Activated CD4-positive, alpha-beta memory T cell treated with anti-CD3 and anti-CD28 coated beads for 36 hours (primary cell): ENCODE measurements at regions of chr9 and their contacts with region 1.

Region 1: GRCh38 chr9:37302277-37302676 is 120.2 kb upstream of the GRHPR start:
- DNase-seq: peak; percentile 57
- H3K4me3 Mint-ChIP-seq: no peak overlapping the region
- H3K27ac Mint-ChIP-seq: peak overlapping the region; percentile 80
- H3K4me1 Mint-ChIP-seq: peaks cover 39% of the 10 kb centered on the region
- H3K27me3 Mint-ChIP-seq: no peaks in the 10 kb centered on the region

Region 2: DNA sequence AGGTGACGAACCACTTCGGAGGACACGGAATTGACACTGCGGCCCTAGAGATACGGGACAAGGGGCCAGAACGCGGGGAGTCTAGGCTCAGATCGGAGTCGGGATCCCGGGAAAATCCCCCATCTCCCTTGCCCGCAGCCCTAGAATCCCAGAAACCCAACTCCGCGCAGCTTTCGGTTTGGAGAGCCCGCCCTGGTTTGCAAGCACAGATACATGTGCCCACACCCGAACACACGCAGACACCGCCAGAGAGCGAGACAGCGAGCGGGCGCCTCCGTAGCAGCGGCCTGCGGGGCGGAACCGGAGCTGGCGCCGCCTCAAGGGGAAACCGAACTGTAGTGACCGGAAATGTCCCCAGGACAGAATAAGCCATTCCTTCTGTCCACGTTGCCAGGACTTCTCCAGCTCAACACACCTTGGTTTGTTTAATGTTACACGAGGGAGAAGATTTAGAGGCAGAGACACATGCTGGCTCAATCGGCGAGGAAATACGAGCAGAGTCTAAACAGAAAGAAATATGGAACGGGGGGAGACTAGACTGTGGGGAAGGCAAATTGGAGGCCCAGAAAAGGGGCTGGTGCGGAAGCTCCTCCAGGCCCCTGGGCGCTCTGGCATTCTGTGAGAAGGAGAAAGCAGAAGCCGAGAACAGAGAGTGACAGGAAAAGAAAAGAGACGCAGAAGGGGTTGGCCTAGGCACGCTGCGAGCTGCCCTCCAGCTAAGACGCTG is 265.3 kb before region 1 on chr9:
- CTCF ChIA-PET with region 1: no interaction called
- POLR2A ChIA-PET with region 1: no interaction called
- intact Hi-C with region 1: loop called (anchors 5 kb)
- DNase-seq: peak; percentile 56
- H3K4me3 Mint-ChIP-seq: peak overlapping the region; percentile 72
- H3K27ac Mint-ChIP-seq: no peak overlapping the region
- H3K4me1 Mint-ChIP-seq: peaks cover 30% of the 10 kb centered on the region
- H3K27me3 Mint-ChIP-seq: peaks cover 81% of the 10 kb centered on the region

Region 3: GRCh38 chr9:37066139-37066725 is 236.0 kb before region 1 on chr9:
- CTCF ChIA-PET with region 1: no interaction called
- POLR2A ChIA-PET with region 1: no interaction called
- intact Hi-C with region 1: no loop called
- DNase-seq: no peak
- H3K4me3 Mint-ChIP-seq: no peak overlapping the region
- H3K27ac Mint-ChIP-seq: no peak overlapping the region
- H3K4me1 Mint-ChIP-seq: no peaks in the 10 kb centered on the region
- H3K27me3 Mint-ChIP-seq: peaks cover 31% of the 10 kb centered on the region

Region 4: DNA sequence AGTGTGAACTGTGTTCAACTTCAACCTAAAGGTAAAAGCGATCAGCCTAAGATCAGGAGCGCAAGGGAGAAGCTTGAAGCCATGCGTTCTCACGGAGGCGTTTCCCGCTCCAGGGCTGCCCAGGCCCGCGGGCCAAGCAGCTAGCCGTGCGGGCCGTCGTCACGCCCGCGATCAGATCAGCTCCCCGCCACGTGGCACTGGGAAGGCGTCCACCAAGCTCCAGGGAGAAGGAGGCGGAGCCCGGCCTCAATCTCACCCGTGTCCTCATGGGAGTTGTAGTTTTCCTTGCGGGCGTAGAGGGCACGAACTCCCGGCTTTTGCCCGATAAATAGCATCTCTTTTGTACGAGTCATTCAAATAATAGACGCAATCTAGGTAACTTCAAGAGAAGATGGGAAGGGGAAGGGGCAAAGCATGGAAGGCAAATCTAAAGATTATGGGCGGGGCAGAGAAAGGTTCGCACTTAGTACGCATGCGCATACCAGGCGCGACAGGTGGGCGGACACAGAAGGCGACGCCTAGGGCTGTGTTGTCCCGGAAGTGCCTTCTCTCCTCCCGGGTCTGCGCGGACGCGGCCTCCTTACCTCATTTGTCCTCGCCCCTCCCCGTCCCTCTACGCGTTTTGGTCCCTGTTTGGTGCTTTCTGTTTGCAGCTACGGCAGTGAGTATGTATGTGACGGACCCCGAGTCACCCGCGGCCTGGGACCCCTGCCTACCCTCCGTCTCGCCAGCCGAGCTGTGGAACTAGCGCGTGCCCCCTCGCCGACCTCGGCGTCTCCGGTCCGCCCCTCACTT is 222.7 kb before region 1 on chr9:
- CTCF ChIA-PET with region 1: no interaction called
- POLR2A ChIA-PET with region 1: no interaction called
- intact Hi-C with region 1: loop called (anchors 5 kb)
- DNase-seq: peak; percentile 96
- H3K4me3 Mint-ChIP-seq: peak overlapping the region; percentile 98
- H3K27ac Mint-ChIP-seq: peak overlapping the region; percentile 93
- H3K4me1 Mint-ChIP-seq: peaks cover 46% of the 10 kb centered on the region
- H3K27me3 Mint-ChIP-seq: peaks cover 8% of the 10 kb centered on the region

Region 5: DNA sequence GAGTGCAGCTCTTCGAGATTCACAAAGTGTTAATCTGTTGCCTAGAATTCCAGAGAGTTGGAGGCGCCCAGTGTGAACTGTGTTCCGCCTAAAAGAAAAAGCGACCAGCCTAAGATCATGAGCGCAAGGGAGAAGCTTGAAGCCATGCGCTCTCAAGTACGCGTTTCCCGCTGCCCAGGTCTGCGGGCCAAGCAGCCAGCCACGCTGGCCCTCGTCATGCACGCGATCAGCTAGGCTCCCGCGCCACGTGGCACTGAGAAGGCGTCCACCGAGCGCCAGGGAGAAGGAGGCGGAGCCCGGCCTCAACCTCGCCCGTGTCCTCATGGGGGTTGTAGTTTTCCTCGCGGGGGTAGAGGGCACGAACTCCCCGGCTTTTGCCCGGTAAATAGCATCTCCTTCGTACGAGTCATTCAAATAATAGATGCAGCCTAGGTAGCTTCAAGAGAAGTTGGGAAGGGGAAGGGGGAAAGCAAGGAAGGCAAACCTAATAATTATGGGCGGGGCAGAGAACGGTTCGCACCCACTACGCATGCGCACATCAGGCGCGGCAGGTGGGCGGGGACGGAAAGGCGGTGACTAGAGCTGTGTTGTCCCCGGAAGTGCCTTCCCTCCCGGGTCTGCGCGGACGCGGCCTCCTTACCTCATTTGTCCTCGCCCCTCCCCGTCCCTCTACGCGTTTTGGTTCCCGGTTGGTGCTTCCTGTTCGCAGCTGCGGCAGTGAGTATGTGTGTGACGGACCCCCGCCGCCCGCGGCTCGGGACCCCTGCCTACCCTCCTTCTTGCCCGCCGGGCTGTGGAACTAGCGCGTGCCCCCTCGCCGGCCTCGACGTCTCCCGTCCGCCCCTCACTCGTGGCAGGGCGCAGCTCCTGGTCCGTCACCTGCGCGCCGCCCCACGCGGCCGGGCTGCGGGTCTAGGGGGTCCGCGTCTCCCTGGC is 182.1 kb before region 1 on chr9 and contains the start of gene ZCCHC7:
- CTCF ChIA-PET with region 1: no interaction called
- POLR2A ChIA-PET with region 1: no interaction called
- intact Hi-C with region 1: loop called (anchors 2 kb)
- DNase-seq: peak; percentile 98
- H3K4me3 Mint-ChIP-seq: peak within 1 kb of the TSS; percentile 92
- H3K27ac Mint-ChIP-seq: peak within 1 kb of the TSS; percentile 92
- H3K4me1 Mint-ChIP-seq: peaks cover 33% of the 10 kb centered on the region
- H3K27me3 Mint-ChIP-seq: no peaks in the 10 kb centered on the region
- total RNA-seq, gene ZCCHC7: 26.8 to 28.1 TPM

Region 6: DNA sequence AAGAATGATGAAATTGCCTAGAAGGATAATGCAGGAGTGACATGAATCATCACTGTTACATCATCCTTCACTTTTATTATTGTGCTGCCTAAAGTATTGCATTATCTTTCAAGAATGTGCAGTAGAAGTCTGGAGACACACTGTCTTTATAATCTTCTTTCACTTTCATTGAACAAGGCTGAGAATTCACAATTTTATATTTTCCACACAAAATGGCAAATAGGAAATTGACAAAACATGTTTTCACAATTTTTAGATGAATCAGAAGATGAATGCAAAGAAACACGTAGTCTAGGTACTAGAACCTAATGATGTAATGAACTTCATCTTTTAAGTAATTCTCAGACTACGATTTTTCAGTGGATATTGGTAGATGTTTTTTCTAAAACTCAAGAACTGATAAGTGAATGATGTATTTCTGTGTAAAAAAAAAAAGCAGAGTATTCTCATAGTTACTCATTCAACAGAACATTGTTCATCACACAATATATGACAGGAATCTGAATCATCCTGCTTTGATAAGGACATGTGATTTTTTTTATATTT is 11.3 kb before region 1 on chr9:
- CTCF ChIA-PET with region 1: no interaction called
- POLR2A ChIA-PET with region 1: no interaction called
- intact Hi-C with region 1: loop called (anchors 1 kb)
- DNase-seq: no peak
- H3K4me3 Mint-ChIP-seq: peak overlapping the region; percentile 47
- H3K27ac Mint-ChIP-seq: peak overlapping the region; percentile 92
- H3K4me1 Mint-ChIP-seq: peaks cover 60% of the 10 kb centered on the region
- H3K27me3 Mint-ChIP-seq: no peaks in the 10 kb centered on the region

Region 7: DNA sequence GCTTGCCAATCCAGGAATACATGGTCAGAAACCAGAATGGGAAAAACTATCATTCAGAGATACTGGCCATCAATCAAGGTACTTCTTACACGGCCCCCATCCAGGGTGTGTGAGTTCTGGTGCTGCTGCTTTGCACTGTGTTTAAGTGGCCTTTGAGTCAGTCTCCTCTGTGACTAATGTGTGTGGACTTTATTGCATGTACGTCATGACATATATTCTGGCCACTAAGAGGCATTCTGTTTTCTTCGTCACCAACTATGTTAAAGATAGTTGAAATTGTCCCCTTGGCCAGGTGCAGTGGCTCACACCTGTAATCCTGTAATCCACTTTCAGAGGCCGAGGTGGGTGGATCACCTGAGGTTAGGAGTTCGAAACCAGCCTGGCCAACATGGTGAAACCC is 474.1 kb after region 1 on chr9:
- CTCF ChIA-PET with region 1: no interaction called
- POLR2A ChIA-PET with region 1: no interaction called
- intact Hi-C with region 1: no loop called
- DNase-seq: no peak
- H3K4me3 Mint-ChIP-seq: no peak overlapping the region
- H3K27ac Mint-ChIP-seq: no peak overlapping the region
- H3K4me1 Mint-ChIP-seq: peaks cover 9% of the 10 kb centered on the region
- H3K27me3 Mint-ChIP-seq: no peaks in the 10 kb centered on the region